SK-N-SH (cell line): ENCODE measurements at regions of chr7 and their contacts with region 1.

Region 1: GRCh38 chr7:2680792-2681490 is 7.1 kb upstream of the AMZ1 start:
- DNase-seq: peak; percentile 94
- H3K4me3 ChIP-seq: no peak overlapping the region; a peak in 1 of 4 replicates
- H3K27ac ChIP-seq: no peak overlapping the region
- H3K4me1 ChIP-seq: peaks cover 0 to 3% of the 10 kb centered on the region in 2 experiments; a peak in 1 of 4 replicates
- H3K27me3 ChIP-seq: peaks cover 11% of the 10 kb centered on the region; the same call in 1 of the 2 replicates
- CTCF ChIP-seq: peak; percentile 76
- EP300 ChIP-seq: no peak
- RAD21 ChIP-seq: peak; percentile 82

Region 2: GRCh38 chr7:2477447-2478398 is 203.2 kb before region 1 on chr7:
- CTCF ChIA-PET with region 1: interaction called, 12 read pairs
- POLR2A ChIA-PET with region 1: no interaction called
- DNase-seq: peak; percentile 100
- H3K4me3 ChIP-seq: no peak overlapping the region
- H3K27ac ChIP-seq: no peak overlapping the region
- H3K4me1 ChIP-seq: peaks cover 0 to 12% of the 10 kb centered on the region in 2 experiments; a peak in 1 of 4 replicates
- H3K27me3 ChIP-seq: no peaks in the 10 kb centered on the region
- CTCF ChIP-seq: peak; percentile 91
- EP300 ChIP-seq: no peak
- RAD21 ChIP-seq: peak; percentile 93

Region 3: DNA sequence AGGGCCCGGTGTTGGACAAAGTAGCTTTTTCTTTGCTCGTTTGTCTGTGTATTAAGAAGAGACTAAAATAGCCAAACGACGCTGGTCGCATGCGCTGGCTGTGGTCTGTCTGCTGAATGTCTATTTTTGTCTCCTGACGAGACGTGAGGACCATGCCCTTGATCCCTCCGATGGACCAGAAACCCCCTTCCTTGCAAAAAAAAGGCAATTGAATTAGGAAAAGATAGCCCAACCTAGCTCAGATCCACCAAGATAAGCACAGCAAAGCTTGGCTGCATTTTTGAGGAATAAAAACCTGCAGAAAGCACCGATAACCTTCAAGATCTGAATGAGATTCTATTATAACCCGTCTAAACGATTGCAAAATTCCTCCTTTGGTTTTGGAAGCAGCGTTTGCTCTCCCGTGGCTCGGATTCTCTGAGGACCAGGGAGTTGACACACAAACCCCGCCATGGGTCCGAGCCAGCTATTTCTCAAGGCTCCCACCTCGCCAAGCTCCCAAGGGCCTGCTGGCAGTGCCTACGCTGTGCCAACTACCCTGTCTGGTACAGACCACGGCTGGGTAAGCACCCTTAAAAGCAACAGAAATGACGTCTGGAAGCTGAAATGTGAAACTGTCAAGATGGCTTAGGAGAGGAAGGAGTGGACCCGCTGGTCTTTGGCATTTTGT is 66.9 kb before region 1 on chr7:
- CTCF ChIA-PET with region 1: interaction called, 10 read pairs
- POLR2A ChIA-PET with region 1: no interaction called
- DNase-seq: peak; percentile 77
- H3K4me3 ChIP-seq: no peak overlapping the region
- H3K27ac ChIP-seq: peak overlapping the region in 1 of 2 experiments; percentile 40; a peak in 2 of 4 replicates
- H3K4me1 ChIP-seq: peaks cover 0 to 46% of the 10 kb centered on the region in 2 experiments; a peak in 3 of 4 replicates
- H3K27me3 ChIP-seq: no peaks in the 10 kb centered on the region
- CTCF ChIP-seq: no peak
- EP300 ChIP-seq: no peak
- RAD21 ChIP-seq: no peak

Region 4: GRCh38 chr7:2651336-2651735 is 29.6 kb before region 1 on chr7:
- CTCF ChIA-PET with region 1: interaction called, 22 read pairs
- POLR2A ChIA-PET with region 1: no interaction called
- DNase-seq: no peak
- H3K4me3 ChIP-seq: no peak overlapping the region
- H3K27ac ChIP-seq: no peak overlapping the region
- H3K4me1 ChIP-seq: peaks cover 0 to 23% of the 10 kb centered on the region in 2 experiments; a peak in 1 of 4 replicates
- H3K27me3 ChIP-seq: no peaks in the 10 kb centered on the region
- CTCF ChIP-seq: peak; percentile 36
- EP300 ChIP-seq: no peak
- RAD21 ChIP-seq: no peak

Region 5: DNA sequence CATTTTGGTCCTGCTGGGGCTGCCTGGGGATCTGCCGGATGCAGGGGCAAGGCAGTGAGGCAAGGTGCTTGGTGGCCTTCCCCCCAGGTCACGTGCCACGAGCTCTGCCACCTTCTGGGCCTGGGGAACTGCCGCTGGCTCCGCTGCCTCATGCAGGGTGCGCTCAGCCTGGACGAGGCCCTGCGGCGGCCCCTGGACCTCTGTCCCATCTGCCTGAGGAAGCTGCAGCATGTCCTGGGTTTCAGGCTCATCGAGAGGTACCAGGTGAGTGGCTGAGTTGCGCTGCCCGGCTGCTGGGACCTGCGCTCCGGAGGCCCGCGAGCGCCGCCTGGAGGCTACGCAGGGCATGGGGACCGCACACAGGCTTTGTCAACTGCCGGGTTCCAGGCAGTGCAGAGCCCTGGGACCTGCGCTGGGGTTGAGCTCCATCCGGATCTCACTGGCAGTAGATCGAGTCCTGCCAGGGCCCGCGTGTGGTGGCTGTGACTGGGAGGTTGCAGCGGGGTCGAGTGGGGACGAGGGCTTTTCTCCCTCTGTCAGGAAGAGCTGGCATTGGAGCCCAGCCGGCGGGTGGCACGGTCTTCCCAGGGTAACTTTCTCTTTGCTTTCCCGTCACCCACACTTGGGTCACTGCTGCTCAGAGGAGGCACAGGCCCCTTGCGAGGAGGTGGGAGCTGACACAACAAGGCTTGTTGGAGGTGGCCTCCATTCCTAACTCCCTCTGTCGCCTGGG is 28.8 kb after region 1 on chr7:
- CTCF ChIA-PET with region 1: interaction called, 55 read pairs
- POLR2A ChIA-PET with region 1: no interaction called
- DNase-seq: peak; percentile 62
- H3K4me3 ChIP-seq: no peak overlapping the region
- H3K27ac ChIP-seq: no peak overlapping the region
- H3K4me1 ChIP-seq: peaks cover 0 to 4% of the 10 kb centered on the region in 2 experiments; a peak in 1 of 4 replicates
- H3K27me3 ChIP-seq: no peaks in the 10 kb centered on the region
- CTCF ChIP-seq: peak; percentile 26
- EP300 ChIP-seq: no peak
- RAD21 ChIP-seq: peak; percentile 28